OCI-LY7 (cell line): ENCODE measurements at regions of chr16 and their contacts with region 1.

Region 1: GRCh38 chr16:3400779-3401688 is at the starts of genes ZNF174 and ZSCAN32:
- DNase-seq: peak; percentile 100
- H3K4me3 ChIP-seq: peak within 1 kb of the TSS; percentile 76
- H3K27ac ChIP-seq: peak within 1 kb of the TSS; percentile 58
- H3K4me1 ChIP-seq: peaks cover 36% of the 10 kb centered on the region
- CTCF ChIP-seq: peak; percentile 31; the same call in 1 of the 2 replicates
- total RNA-seq, gene ZNF174: 21.1 and 23.3 TPM in 2 replicates
- total RNA-seq, gene ZSCAN32: 19.4 and 22.5 TPM in 2 replicates

Region 2: DNA sequence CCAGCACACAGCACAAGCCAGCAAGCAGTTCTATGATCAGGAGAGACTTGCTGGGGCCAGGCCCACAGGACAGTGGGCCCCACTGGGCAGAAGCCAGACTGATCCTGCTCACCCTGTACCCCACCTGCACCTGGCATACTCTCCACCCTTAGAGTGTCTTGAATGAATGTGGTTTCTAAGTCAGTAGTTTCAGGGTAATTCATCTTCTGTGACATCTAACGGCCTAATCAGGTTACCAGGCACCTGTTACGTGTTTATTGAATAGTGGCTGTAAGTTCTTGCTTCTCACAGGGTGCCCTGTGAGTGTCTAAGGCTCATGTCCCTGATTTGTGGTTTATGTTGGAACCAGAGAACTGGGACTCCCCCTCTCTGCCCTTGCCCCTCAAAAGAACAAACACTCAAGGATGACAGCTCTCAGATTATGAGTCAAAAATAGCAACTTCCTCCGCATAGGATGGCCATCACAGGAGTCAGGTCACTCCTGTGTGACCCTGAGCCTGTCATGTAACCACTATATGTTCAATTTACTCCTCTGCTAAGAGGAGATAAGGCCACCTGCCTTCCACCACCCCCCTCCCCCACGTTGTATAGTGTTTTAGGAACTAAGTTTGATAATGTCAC is 52.4 kb before region 1 on chr16:
- CTCF ChIA-PET with region 1: no interaction called
- POLR2A ChIA-PET with region 1: no interaction called
- intact Hi-C with region 1: loop called (anchors 2 kb)
- DNase-seq: peak; percentile 92
- H3K4me3 ChIP-seq: peak overlapping the region; percentile 33
- H3K27ac ChIP-seq: peak overlapping the region; percentile 98
- H3K4me1 ChIP-seq: peaks cover 53% of the 10 kb centered on the region
- CTCF ChIP-seq: no peak

Region 3: DNA sequence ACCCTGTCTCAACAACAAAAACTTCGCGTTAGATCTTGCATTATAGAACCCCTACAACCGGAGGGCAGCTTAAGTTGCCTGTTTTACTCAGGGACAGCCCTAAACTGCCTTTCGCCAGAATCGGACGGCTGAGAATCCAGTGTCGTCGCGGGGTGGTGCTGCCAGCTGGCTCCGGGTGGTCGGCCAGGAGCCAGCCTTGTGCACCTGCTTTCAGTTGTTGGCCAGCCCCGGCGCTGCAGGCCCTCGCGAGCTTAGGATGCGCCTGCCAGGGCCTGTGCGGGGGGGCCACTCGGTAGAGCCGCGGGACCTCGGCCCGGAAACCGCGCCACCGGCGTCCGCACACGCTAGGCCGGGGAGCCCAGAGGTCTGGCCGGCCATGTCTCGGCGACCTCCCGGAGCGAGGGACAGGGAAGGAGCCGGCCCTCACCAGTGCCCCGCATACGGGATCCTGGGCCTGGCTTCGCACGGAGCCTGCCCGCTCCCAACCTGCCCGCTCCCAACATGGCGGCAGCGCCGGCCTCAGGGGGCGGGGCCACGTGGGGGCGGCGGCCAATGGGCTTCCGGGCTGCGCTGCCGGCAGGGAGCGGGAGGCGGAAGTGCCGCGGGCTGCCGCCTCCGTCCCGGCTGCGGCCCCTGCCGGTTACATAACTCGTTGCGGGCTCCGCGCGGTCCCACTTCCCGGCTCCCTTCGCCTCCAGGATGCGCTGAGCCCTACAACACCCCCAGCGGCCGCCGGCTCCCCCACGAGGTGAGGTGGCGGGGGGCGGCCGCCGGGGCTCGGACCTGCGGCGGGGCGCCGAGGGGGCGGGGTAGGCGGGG is 56.6 kb after region 1 on chr16:
- CTCF ChIA-PET with region 1: no interaction called
- POLR2A ChIA-PET with region 1: no interaction called
- intact Hi-C with region 1: loop called (anchors 5 kb)
- DNase-seq: peak; percentile 94
- H3K4me3 ChIP-seq: peak overlapping the region; percentile 98
- H3K27ac ChIP-seq: peak overlapping the region; percentile 53
- H3K4me1 ChIP-seq: peaks cover 43% of the 10 kb centered on the region
- CTCF ChIP-seq: peak; percentile 60

Region 4: GRCh38 chr16:3484328-3485096 is 83.5 kb after region 1 on chr16:
- CTCF ChIA-PET with region 1: no interaction called
- POLR2A ChIA-PET with region 1: interaction called, 10 read pairs
- intact Hi-C with region 1: no loop called
- DNase-seq: no peak
- H3K4me3 ChIP-seq: no peak overlapping the region
- H3K27ac ChIP-seq: no peak overlapping the region
- H3K4me1 ChIP-seq: no peaks in the 10 kb centered on the region
- CTCF ChIP-seq: no peak

Region 5: GRCh38 chr16:3503523-3503922 is 102.5 kb after region 1 on chr16:
- CTCF ChIA-PET with region 1: no interaction called
- POLR2A ChIA-PET with region 1: interaction called, 3 read pairs
- intact Hi-C with region 1: loop called (anchors 5 kb)
- DNase-seq: peak; percentile 21
- H3K4me3 ChIP-seq: no peak overlapping the region
- H3K27ac ChIP-seq: no peak overlapping the region
- H3K4me1 ChIP-seq: peaks cover 16% of the 10 kb centered on the region
- CTCF ChIP-seq: no peak